Panc1 (cell line): ENCODE measurements at regions of chr13 and their contacts with region 1.

Region 1: GRCh38 chr13:26985285-26985878 is 186.2 kb downstream of the USP12 start:
- DNase-seq: peak; percentile 71
- ATAC-seq: peak; percentile 38
- H3K4me3 ChIP-seq: no peak overlapping the region
- H3K27ac ChIP-seq: peak overlapping the region; percentile 100
- H3K4me1 ChIP-seq: peaks cover 76% of the 10 kb centered on the region
- H3K27me3 ChIP-seq: no peaks in the 10 kb centered on the region
- CTCF ChIP-seq: no peak; the same call in none of the 2 replicates

Region 2: DNA sequence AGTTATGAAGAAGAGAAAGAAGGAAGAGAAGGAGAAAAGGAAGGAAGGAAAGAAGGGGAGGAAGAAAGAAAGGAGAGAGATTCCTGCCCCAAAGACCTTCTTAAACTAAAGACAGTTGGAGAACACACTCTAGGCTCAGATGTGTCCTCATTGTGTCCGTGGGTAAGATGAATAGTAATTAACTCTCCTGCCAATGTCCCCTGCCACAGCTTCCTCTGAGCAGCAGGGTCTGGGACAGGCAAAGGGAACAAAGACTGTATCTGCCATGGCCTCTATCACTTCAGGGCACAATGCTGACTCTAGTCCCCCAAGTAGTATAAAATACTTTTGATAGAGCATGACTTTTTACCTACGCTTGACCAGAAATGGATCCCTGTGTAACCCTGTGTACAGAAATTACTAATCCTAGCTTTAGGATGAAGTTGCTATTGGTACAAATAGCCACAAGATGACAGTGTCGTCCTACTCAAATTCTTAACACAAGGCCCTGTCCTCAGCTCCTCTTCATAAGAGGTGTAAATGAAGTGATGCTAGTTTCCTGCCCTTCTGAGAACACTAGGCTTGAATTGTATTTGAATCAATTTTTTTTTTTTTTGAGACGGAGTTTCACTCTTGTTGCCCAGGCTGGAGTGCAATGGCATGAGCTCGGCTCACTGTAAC is 38.6 kb before region 1 on chr13:
- CTCF ChIA-PET with region 1: interaction called, 16 read pairs
- POLR2A ChIA-PET with region 1: no interaction called
- in situ Hi-C with region 1: no loop called
- intact Hi-C with region 1: no loop called
- DNase-seq: peak; percentile 50
- ATAC-seq: peak; percentile 93
- H3K4me3 ChIP-seq: no peak overlapping the region
- H3K27ac ChIP-seq: peak overlapping the region; percentile 94
- H3K4me1 ChIP-seq: peaks cover 43% of the 10 kb centered on the region
- H3K27me3 ChIP-seq: no peaks in the 10 kb centered on the region
- CTCF ChIP-seq: peak; percentile 87

Region 3: DNA sequence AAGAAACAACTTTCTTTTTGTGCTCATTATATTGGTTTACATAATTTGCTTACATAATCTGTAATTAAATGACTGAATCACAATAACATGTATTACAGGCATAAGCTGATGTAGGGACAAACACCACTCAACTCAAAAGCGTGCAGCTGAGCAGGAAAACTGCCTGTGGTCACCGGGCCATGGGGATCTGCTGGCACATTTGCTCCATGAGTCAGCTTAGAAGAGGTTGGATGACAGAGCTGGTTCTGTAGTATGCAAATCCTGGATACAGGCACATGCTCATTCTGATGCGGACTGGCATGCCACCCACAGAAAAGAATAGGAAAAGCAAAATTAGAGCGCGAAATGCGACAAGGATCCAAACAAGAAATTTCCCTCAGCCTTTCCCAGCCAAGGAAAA is 57.6 kb after region 1 on chr13:
- CTCF ChIA-PET with region 1: no interaction called
- POLR2A ChIA-PET with region 1: no interaction called
- in situ Hi-C with region 1: no loop called
- intact Hi-C with region 1: loop called (anchors 10 kb)
- DNase-seq: peak; percentile 87
- ATAC-seq: peak; percentile 88
- H3K4me3 ChIP-seq: no peak overlapping the region
- H3K27ac ChIP-seq: peak overlapping the region; percentile 98
- H3K4me1 ChIP-seq: peaks cover 48% of the 10 kb centered on the region
- H3K27me3 ChIP-seq: no peaks in the 10 kb centered on the region
- CTCF ChIP-seq: no peak

Region 4: DNA sequence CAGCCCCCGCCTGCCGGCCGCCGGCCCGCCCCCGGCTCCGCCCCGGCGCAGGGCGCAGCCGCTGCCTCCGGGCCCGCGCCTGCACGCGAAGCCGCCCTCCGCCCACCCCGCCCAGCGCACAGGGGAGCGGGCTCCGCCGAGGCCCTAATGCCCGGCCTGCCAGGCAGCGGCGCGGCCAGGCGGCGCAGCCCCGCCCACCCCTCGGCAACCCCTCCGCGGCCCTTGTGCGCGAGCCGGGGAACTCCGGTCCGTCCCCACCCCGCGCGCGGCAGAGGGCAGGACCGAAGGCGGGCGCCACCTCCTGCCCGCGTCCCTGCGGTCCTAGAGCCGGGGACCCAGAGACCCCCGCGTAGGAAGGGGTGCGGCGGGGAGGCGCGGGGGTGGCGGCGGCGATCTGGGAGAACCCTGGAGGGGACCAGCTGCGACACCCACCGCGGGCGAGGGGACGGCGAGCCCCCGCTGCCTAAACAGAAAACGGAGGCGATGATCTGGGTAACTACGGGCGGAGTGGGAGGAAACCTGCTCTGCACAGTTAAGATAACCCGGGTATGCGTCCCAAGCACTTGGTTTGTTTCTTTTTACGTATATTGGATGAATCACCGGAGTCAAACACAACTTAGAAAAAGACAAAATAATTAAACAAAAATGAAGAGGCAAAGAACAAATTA is 186.6 kb after region 1 on chr13:
- CTCF ChIA-PET with region 1: no interaction called
- POLR2A ChIA-PET with region 1: interaction called, 3 read pairs
- in situ Hi-C with region 1: no loop called
- intact Hi-C with region 1: loop called (anchors 5 kb)
- DNase-seq: no peak
- ATAC-seq: peak; percentile 92
- H3K4me3 ChIP-seq: peak overlapping the region; percentile 69 to 70
- H3K27ac ChIP-seq: peak overlapping the region; percentile 88
- H3K4me1 ChIP-seq: peaks cover 30% of the 10 kb centered on the region
- H3K27me3 ChIP-seq: no peaks in the 10 kb centered on the region
- CTCF ChIP-seq: peak; percentile 3

Region 5: GRCh38 chr13:27270594-27271520 is 285.5 kb after region 1 on chr13 and contains the start of gene RASL11A:
- CTCF ChIA-PET with region 1: interaction called, 3 read pairs
- POLR2A ChIA-PET with region 1: no interaction called
- in situ Hi-C with region 1: no loop called
- intact Hi-C with region 1: loop called (anchors 10 kb)
- DNase-seq: no peak
- ATAC-seq: peak; percentile 92
- H3K4me3 ChIP-seq: peak within 1 kb of the TSS; percentile 69 to 72
- H3K27ac ChIP-seq: peak within 1 kb of the TSS; percentile 90
- H3K4me1 ChIP-seq: peaks cover 16% of the 10 kb centered on the region
- H3K27me3 ChIP-seq: no peaks in the 10 kb centered on the region
- CTCF ChIP-seq: peak; percentile 92
- total RNA-seq, gene RASL11A: 136 TPM

Region 6: GRCh38 chr13:27362064-27362883 is 376.9 kb after region 1 on chr13:
- CTCF ChIA-PET with region 1: interaction called, 21 read pairs
- POLR2A ChIA-PET with region 1: no interaction called
- in situ Hi-C with region 1: no loop called
- intact Hi-C with region 1: loop called (anchors 1 kb)
- DNase-seq: no peak
- ATAC-seq: peak; percentile 95
- H3K4me3 ChIP-seq: peak overlapping the region; percentile 50 to 77
- H3K27ac ChIP-seq: peak overlapping the region; percentile 68
- H3K4me1 ChIP-seq: peaks cover 28% of the 10 kb centered on the region
- H3K27me3 ChIP-seq: no peaks in the 10 kb centered on the region
- CTCF ChIP-seq: peak; percentile 91